SK-N-SH (cell line): ENCODE measurements at regions of chr2 and their contacts with region 1.

Region 1: DNA sequence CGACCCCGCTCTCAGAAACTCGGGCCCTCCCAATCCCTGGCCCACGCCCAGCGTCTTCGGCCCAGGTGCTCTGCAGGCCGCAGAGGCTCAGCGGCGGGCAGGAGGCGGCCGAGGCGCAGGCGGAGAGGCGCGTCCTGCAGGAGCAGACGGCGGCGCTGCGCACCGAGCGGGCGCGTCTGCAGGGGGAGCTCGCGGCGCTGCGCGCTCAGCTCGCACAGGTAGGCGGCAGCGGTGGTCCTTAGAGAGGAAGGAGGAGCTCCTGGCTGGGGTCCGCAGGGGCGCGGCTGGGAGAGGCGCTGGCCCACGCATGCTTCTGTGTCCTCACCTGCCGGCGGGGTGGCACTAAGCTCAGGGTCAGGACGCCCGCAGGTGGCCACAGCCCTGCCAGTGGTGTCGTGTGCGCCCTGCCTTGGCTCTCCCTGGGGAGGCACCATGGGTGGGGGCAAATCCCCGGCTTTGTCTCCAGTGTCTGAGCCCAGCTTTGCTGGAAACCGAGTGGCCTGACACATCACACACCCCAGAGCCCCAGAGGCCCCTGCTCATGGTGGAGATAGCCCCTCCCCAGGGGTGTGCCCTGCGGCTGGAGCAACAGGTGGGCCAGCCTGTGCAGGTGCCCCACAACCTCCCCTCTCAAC is 14.9 kb upstream of the SNED1 start:
- DNase-seq: peak; percentile 76
- H3K4me3 ChIP-seq: no peak overlapping the region
- H3K27ac ChIP-seq: no peak overlapping the region
- H3K4me1 ChIP-seq: peaks cover 0 to 5% of the 10 kb centered on the region in 2 experiments; a peak in 2 of 4 replicates
- H3K27me3 ChIP-seq: no peaks in the 10 kb centered on the region
- CTCF ChIP-seq: peak; percentile 35
- EP300 ChIP-seq: no peak
- RAD21 ChIP-seq: peak; percentile 41; the same call in 1 of the 2 replicates

Region 2: DNA sequence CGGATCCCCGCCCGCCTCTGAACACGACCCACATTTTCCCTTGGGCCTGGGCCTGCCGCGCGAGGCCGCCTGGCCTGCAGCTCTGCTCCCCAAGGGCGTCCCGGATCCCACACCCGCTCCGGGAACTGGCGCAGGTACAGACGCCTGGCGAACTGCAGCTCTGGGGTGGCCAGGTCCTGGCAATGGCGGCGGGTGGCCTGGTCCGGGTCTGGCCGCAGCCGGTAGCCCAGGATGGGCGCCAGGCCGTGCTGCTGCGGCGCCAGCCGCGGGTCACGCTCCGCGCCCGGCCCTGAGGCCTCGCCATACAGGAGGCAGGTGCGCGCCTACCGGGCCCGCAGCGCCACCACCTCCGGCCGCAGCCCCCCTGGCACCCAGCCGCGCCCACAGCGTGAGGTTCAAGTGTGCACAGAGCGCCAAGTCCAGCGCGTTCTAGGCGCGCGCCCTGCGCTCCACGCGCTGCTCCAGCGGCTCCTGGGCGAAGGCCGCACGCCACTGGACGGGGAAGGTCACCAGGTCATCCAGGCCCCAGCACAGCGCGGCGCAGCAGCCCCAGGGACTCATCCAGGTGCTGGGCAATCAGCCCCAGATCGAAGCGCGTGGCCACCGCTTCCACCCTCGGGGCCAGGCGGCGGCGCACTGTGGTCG is 282.3 kb before region 1 on chr2:
- CTCF ChIA-PET with region 1: no interaction called
- POLR2A ChIA-PET with region 1: no interaction called
- DNase-seq: no peak
- H3K4me3 ChIP-seq: no peak overlapping the region
- H3K27ac ChIP-seq: no peak overlapping the region
- H3K4me1 ChIP-seq: no peaks in the 10 kb centered on the region; a peak in 1 of 4 replicates
- H3K27me3 ChIP-seq: peaks cover 5% of the 10 kb centered on the region; the same call in 1 of the 2 replicates
- CTCF ChIP-seq: no peak
- EP300 ChIP-seq: no peak
- RAD21 ChIP-seq: no peak

Region 3: GRCh38 chr2:240972636-240973521 is 10.6 kb before region 1 on chr2:
- CTCF ChIA-PET with region 1: interaction called, 17 read pairs
- POLR2A ChIA-PET with region 1: interaction called, 3 read pairs
- DNase-seq: peak; percentile 85
- H3K4me3 ChIP-seq: no peak overlapping the region; a peak in 1 of 4 replicates
- H3K27ac ChIP-seq: peak overlapping the region in 1 of 2 experiments; percentile 64; a peak in 2 of 4 replicates
- H3K4me1 ChIP-seq: peaks cover 0 to 22% of the 10 kb centered on the region in 2 experiments; a peak in 1 of 4 replicates
- H3K27me3 ChIP-seq: no peaks in the 10 kb centered on the region
- CTCF ChIP-seq: no peak
- EP300 ChIP-seq: no peak
- RAD21 ChIP-seq: no peak

Region 4: GRCh38 chr2:241000786-241001321 is 17.4 kb after region 1 on chr2:
- CTCF ChIA-PET with region 1: interaction called, 16 read pairs
- POLR2A ChIA-PET with region 1: no interaction called
- DNase-seq: no peak
- H3K4me3 ChIP-seq: no peak overlapping the region
- H3K27ac ChIP-seq: no peak overlapping the region
- H3K4me1 ChIP-seq: peaks cover 0 to 3% of the 10 kb centered on the region in 2 experiments; a peak in 1 of 4 replicates
- H3K27me3 ChIP-seq: no peaks in the 10 kb centered on the region
- CTCF ChIP-seq: no peak
- EP300 ChIP-seq: no peak
- RAD21 ChIP-seq: no peak

Region 5: GRCh38 chr2:241519669-241520068 is 536.2 kb after region 1 on chr2:
- CTCF ChIA-PET with region 1: no interaction called
- POLR2A ChIA-PET with region 1: no interaction called
- DNase-seq: no peak
- H3K4me3 ChIP-seq: no peak overlapping the region
- H3K27ac ChIP-seq: no peak overlapping the region
- H3K4me1 ChIP-seq: no peaks in the 10 kb centered on the region
- H3K27me3 ChIP-seq: no peaks in the 10 kb centered on the region
- CTCF ChIP-seq: no peak
- EP300 ChIP-seq: no peak
- RAD21 ChIP-seq: no peak